Panc1 (cell line): ENCODE measurements at regions of chr19 and their contacts with region 1.

Region 1: DNA sequence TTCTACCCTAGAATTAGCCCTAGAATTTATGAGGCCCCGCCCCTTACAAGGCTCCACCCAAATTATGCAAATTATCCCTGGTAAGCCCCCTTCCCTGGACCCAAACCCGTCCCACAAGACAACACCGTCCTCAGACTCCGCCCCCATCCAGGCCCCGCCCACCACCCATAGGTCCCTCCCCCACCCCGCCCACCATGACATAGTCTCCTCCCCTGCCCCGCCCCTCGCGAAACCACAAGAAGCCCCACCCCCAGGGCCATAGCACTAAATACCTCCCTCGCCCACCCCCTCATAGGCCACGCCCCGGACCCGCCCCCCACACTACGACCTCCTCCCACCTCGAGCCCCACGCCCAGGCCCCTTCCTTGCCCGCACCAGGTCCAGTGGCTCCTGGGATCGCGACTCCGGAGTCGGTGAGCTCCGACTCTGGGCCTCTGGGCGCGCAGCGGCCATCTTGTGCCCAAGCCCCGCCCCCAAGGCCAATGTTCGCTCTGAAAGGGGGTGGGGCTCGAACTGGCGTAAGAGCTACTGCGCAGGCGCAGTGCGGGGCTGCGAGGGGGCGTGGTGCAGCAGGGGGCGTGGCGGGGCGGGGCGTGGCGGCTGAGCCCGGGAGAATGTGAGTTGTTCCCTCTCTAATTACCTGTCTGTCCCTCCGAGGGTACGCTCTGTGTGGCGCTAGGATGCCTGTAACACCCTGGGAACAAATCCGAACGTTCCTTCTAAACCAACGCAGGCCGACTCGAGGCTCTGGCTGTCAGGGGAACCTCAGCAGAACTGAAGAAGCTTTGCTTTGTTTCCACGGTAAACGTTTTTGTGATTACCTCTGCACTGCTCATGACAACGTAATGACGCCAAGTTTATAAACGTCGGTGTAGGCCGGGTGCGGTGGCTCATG is at the start of gene ZNF784:
- DNase-seq: no peak
- ATAC-seq: peak; percentile 85
- H3K4me3 ChIP-seq: peak within 1 kb of the TSS; percentile 60 to 82
- H3K27ac ChIP-seq: peak within 1 kb of the TSS; percentile 49
- H3K4me1 ChIP-seq: 0 out of 2 replicates have a peak, but pooled peaks cover 3% of the 10 kb centered on the region
- H3K27me3 ChIP-seq: no peaks in the 10 kb centered on the region
- CTCF ChIP-seq: no peak
- total RNA-seq, gene ZNF784: 8.9 TPM

Region 2: GRCh38 chr19:55027472-55028337 is 596.7 kb before region 1 on chr19:
- CTCF ChIA-PET with region 1: no interaction called
- POLR2A ChIA-PET with region 1: interaction called, 20 read pairs
- in situ Hi-C with region 1: no loop called
- intact Hi-C with region 1: no loop called
- DNase-seq: no peak
- ATAC-seq: peak; percentile 90
- H3K4me3 ChIP-seq: peak overlapping the region; percentile 73 to 89
- H3K27ac ChIP-seq: peak overlapping the region; percentile 89
- H3K4me1 ChIP-seq: 0 out of 2 replicates have a peak, but pooled peaks cover 2% of the 10 kb centered on the region
- H3K27me3 ChIP-seq: no peaks in the 10 kb centered on the region
- CTCF ChIP-seq: no peak

Region 3: GRCh38 chr19:55132453-55133129 is 491.8 kb before region 1 on chr19:
- CTCF ChIA-PET with region 1: no interaction called
- POLR2A ChIA-PET with region 1: no interaction called
- in situ Hi-C with region 1: no loop called
- intact Hi-C with region 1: no loop called
- DNase-seq: no peak
- ATAC-seq: no peak; the same call in 1 of the 2 replicates
- H3K4me3 ChIP-seq: no peak overlapping the region
- H3K27ac ChIP-seq: no peak overlapping the region
- H3K4me1 ChIP-seq: peaks cover 3% of the 10 kb centered on the region; the same call in 1 of the 2 replicates
- H3K27me3 ChIP-seq: no peaks in the 10 kb centered on the region
- CTCF ChIP-seq: no peak

Region 4: GRCh38 chr19:55325172-55325571 is 299.2 kb before region 1 on chr19 and contains the start of gene TMEM150B:
- CTCF ChIA-PET with region 1: no interaction called
- POLR2A ChIA-PET with region 1: interaction called, 11 read pairs
- in situ Hi-C with region 1: no loop called
- intact Hi-C with region 1: no loop called
- DNase-seq: no peak
- ATAC-seq: no peak
- H3K4me3 ChIP-seq: no peak within 1 kb of the TSS
- H3K27ac ChIP-seq: no peak within 1 kb of the TSS
- H3K4me1 ChIP-seq: peaks cover 9% of the 10 kb centered on the region; the same call in 1 of the 2 replicates
- H3K27me3 ChIP-seq: no peaks in the 10 kb centered on the region
- CTCF ChIP-seq: no peak
- total RNA-seq, gene TMEM150B: not detected

Region 5: GRCh38 chr19:55526216-55527196 is 97.8 kb before region 1 on chr19:
- CTCF ChIA-PET with region 1: interaction called, 10 read pairs
- POLR2A ChIA-PET with region 1: interaction called, 4 read pairs
- in situ Hi-C with region 1: no loop called
- intact Hi-C with region 1: no loop called
- DNase-seq: no peak
- ATAC-seq: peak; percentile 88
- H3K4me3 ChIP-seq: 0 out of 4 replicates have a peak overlapping the region, but pooled peaks of 1 of the 2 experiments have one; percentile 5
- H3K27ac ChIP-seq: 0 out of 2 replicates have a peak overlapping the region, but pooled peaks have one; percentile 11
- H3K4me1 ChIP-seq: peaks cover 21% of the 10 kb centered on the region
- H3K27me3 ChIP-seq: no peaks in the 10 kb centered on the region
- CTCF ChIP-seq: no peak

Region 6: GRCh38 chr19:55605207-55605636 is 19.1 kb before region 1 on chr19:
- CTCF ChIA-PET with region 1: interaction called, 3 read pairs
- POLR2A ChIA-PET with region 1: interaction called, 10 read pairs
- in situ Hi-C with region 1: no loop called
- intact Hi-C with region 1: no loop called
- DNase-seq: peak; percentile 97
- ATAC-seq: peak; percentile 88
- H3K4me3 ChIP-seq: peak overlapping the region; percentile 62 to 74
- H3K27ac ChIP-seq: peak overlapping the region; percentile 97
- H3K4me1 ChIP-seq: peaks cover 21% of the 10 kb centered on the region
- H3K27me3 ChIP-seq: no peaks in the 10 kb centered on the region
- CTCF ChIP-seq: no peak

Region 7: DNA sequence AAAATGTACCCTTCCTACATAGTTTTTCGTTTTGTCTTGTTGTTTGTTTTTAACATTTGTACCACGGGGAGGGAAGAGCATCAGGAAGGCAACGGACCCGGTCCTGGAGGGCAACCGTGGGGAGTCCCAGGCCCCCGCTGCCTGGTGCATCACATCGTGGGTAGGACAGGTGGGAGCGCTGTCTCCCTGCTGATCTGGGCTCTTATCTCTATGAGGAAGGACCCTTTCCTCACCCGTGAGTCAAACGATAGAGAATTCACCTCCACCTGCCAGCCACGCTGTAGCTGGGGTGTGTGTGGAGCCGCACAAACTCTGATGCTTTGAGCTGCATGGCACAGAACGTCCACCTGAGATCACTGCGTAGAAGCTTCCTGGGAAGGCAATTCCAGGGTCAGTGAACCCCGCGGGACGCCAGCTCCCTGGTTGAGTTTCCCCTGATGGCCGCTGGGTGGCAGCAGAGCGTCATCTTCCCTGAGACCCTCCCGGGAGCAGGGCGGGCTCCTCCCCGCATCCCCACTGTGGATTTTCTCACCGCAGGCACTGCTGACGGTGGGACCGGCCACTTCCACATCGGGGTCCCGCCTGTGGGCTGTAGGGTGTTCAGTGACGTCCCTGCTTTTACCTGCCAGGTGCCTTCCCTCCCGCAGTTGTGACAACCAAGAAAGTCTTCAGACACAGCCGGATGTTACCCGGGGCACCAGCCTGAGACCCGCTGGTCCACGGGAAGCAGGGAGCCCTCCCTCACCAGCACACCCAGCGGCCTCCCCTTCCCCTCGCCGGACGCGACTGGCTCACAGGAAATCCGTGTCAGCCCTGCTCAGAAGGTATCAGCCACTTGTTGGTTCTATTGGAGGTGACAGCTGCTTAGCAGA is 442.0 kb after region 1 on chr19:
- CTCF ChIA-PET with region 1: no interaction called
- POLR2A ChIA-PET with region 1: interaction called, 12 read pairs
- in situ Hi-C with region 1: no loop called
- intact Hi-C with region 1: no loop called
- DNase-seq: peak; percentile 41
- ATAC-seq: peak; percentile 88
- H3K4me3 ChIP-seq: peak overlapping the region; percentile 24 to 41
- H3K27ac ChIP-seq: no peak overlapping the region
- H3K4me1 ChIP-seq: peaks cover 5% of the 10 kb centered on the region; the same call in 1 of the 2 replicates
- H3K27me3 ChIP-seq: peaks cover 9% of the 10 kb centered on the region
- CTCF ChIP-seq: peak; percentile 99